Activated naive CD4-positive, alpha-beta T cell treated with anti-CD3 and anti-CD28 coated beads, Interleukin-2, amount 10 ng/mL, durations not matched to agents 7 days and 5 days (primary cell): ENCODE measurements at regions of chr1 and their contacts with region 1.

Region 1: GRCh38 chr1:114282751-114283403 is 129.2 kb upstream of the SYT6 start:
- DNase-seq: peak; percentile 91
- H3K4me3 Mint-ChIP-seq: no peak overlapping the region
- H3K27ac Mint-ChIP-seq: no peak overlapping the region
- H3K4me1 Mint-ChIP-seq: peaks cover 2% of the 10 kb centered on the region
- H3K27me3 Mint-ChIP-seq: peaks cover 12% of the 10 kb centered on the region

Region 2: DNA sequence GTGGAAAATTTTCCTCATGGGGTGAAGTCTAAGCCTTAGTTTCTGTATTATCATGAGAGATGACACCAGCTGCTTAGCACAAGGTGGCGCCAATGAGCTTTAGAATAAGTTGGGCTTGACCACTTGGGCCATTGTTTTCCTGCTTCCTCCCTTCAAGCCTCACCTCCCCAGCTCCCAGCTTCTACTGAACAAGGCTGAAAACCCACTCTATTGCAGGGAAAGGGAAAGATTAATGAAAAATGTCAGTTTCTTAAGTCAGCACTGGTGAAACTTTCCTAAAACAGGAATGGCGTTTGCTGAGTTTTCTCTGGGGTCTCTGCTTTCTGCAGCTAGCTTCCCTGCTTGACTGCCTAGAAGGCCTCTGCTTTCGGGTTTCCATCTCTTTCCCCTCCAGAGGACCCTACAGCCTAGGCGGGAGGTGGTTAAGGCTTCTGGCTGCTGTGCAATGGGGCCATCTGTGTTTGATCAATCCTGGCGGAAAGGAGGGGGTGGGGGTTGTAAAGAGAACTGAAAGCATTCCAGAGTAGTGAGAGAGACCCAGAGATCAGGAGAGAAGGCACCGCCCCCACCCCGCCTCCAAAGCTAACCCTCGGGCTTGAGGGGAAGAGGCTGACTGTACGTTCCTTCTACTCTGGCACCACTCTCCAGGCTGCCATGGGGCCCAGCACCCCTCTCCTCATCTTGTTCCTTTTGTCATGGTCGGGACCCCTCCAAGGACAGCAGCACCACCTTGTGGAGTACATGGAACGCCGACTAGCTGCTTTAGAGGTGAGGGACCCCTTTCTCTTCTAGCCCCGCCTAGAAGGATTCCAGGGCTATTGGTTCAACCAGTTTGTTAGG is 303.8 kb before region 1 on chr1 and contains the start of gene OLFML3:
- CTCF ChIA-PET with region 1: interaction called, 38 read pairs
- DNase-seq: peak; percentile 65
- H3K4me3 Mint-ChIP-seq: no peak within 1 kb of the TSS
- H3K27ac Mint-ChIP-seq: peak within 1 kb of the TSS; percentile 47
- H3K4me1 Mint-ChIP-seq: peaks cover 33% of the 10 kb centered on the region
- H3K27me3 Mint-ChIP-seq: no peaks in the 10 kb centered on the region

Region 3: DNA sequence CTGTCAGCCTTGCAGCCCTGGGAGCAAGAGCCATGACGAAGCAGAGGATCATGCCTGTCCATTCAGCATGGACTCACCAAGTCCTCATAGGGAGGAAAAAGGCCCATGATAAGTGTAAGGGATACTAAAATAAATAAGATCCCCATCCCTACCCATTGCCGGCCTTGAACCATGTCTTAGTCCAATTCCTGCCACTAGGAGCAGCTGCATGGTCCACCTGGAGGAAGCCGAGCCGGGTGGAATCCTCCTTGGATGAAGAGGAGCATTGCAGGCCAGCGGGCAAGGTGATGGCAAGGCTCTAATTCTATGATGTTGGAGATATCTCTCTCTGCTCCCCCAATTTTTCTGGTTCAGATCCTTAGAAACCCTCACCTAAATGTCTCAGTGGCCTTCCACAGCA is 90.5 kb before region 1 on chr1:
- CTCF ChIA-PET with region 1: no interaction called
- DNase-seq: no peak
- H3K4me3 Mint-ChIP-seq: no peak overlapping the region
- H3K27ac Mint-ChIP-seq: no peak overlapping the region
- H3K4me1 Mint-ChIP-seq: peaks cover 3% of the 10 kb centered on the region
- H3K27me3 Mint-ChIP-seq: peaks cover 32% of the 10 kb centered on the region

Region 4: GRCh38 chr1:114270282-114270681 is 12.6 kb before region 1 on chr1:
- CTCF ChIA-PET with region 1: interaction called, 19 read pairs
- DNase-seq: no peak
- H3K4me3 Mint-ChIP-seq: no peak overlapping the region
- H3K27ac Mint-ChIP-seq: no peak overlapping the region
- H3K4me1 Mint-ChIP-seq: peaks cover 3% of the 10 kb centered on the region
- H3K27me3 Mint-ChIP-seq: peaks cover 27% of the 10 kb centered on the region